Activated CD4-positive, alpha-beta T cell treated with anti-CD3 and anti-CD28 coated beads for 36 hours (primary cell): ENCODE measurements at regions of chr2 and their contacts with region 1.

Region 1: DNA sequence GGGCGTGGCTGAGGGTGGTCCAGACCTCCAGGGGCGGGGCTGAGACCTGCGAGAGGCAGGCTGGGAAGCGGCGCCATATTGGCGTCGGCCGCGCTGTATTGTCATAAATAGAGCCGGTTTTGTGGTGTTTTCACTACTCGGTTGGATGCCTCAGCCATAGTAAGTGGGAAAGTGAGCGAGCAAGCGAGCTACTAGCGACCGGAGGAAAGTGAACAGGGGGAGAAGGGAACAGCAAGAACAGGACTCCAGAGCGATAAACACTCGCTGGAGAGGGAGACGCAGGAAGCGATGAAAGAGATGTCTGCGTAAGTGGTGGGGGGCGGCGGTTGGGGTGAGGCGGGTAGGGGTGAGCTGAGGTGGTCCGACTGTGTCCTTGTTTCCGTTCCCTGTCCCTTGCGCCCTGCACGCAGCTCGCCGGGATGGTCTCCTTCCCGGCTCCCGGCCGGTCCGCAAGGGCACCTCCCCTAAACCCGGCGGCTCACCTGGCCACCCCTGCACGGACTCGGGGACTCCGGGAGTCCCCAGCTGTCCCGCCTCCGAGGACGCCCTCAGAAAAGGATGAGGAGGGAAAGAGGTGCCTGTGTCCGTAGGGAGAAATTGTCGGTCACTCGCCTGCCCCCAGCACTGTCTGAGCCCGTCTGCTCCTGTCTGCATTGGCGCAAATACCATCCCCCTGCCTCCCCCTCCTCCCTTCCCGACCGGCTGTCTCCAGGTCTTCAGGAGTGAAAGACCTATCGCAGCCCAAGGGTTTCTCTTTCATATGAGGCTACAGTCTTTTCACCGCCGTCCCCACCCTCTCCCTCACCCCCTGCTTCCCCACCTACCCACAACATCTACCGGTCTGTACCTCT is at the start of gene PAPOLG:
- DNase-seq: peak; percentile 99
- ATAC-seq: peak; percentile 98
- H3K4me3 Mint-ChIP-seq: peak within 1 kb of the TSS; percentile 99
- H3K27ac Mint-ChIP-seq: peak within 1 kb of the TSS; percentile 100
- H3K4me1 Mint-ChIP-seq: peaks cover 34% of the 10 kb centered on the region
- H3K27me3 Mint-ChIP-seq: no peaks in the 10 kb centered on the region
- total RNA-seq, gene PAPOLG: 13.8 to 14.2 TPM

Region 2: GRCh38 chr2:61065715-61066709 is 309.6 kb after region 1 on chr2 and contains the start of gene SANBR:
- CTCF ChIA-PET with region 1: no interaction called
- POLR2A ChIA-PET with region 1: no interaction called
- intact Hi-C with region 1: loop called in 1 of 2 experiments (anchors 1 kb)
- DNase-seq: peak; percentile 90
- ATAC-seq: peak; percentile 99
- H3K4me3 Mint-ChIP-seq: peak within 1 kb of the TSS; percentile 80
- H3K27ac Mint-ChIP-seq: peak within 1 kb of the TSS; percentile 78
- H3K4me1 Mint-ChIP-seq: peaks cover 12% of the 10 kb centered on the region
- H3K27me3 Mint-ChIP-seq: no peaks in the 10 kb centered on the region
- total RNA-seq, gene SANBR: 2.5 to 3.0 TPM

Region 3: GRCh38 chr2:62254056-62254917 is 1497.9 kb after region 1 on chr2:
- CTCF ChIA-PET with region 1: no interaction called
- POLR2A ChIA-PET with region 1: no interaction called
- intact Hi-C with region 1: no loop called
- DNase-seq: no peak
- ATAC-seq: no peak
- H3K4me3 Mint-ChIP-seq: no peak overlapping the region
- H3K27ac Mint-ChIP-seq: no peak overlapping the region
- H3K4me1 Mint-ChIP-seq: peaks cover 2% of the 10 kb centered on the region
- H3K27me3 Mint-ChIP-seq: no peaks in the 10 kb centered on the region